Activated CD4-positive, alpha-beta memory T cell treated with anti-CD3 and anti-CD28 coated beads for 36 hours (primary cell): ENCODE measurements at regions of chr12 and their contacts with region 1.

Region 1: DNA sequence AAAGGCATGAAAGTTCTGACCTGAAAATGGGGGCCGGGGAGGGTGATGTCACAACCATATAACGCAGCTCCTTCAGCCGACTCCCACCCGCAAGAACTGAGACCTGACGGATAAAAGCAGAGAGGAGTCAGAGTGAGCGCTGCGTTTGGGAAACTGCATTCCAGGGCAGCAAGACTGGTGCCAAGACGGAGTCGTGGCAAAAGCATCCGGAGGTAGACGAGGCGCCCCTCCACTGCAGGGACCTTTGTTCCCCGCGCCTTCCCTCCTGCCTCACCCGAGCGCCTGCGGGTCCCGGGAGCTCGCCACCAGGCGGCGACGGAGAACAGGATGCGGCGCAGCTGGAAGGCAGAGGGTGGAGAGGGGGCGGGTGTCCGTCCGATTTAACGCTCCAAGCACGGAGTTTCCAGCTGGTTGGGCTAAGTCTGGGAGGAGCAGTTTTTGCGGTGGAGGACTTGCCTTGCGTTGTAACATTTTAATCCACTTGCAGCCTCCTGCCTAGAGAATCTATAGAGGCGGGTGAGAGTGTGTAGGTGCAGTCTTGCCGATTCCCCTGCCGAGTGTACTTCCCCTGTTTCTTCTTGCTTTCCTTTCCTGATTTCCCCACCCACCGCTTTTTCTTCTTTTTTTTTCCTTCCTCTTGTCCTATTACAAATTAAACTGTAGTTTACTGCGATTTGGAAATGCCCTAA is 1.2 kb upstream of the CPNE8 start:
- DNase-seq: peak; percentile 80
- H3K4me3 Mint-ChIP-seq: peak overlapping the region; percentile 82
- H3K27ac Mint-ChIP-seq: peak overlapping the region; percentile 89
- H3K4me1 Mint-ChIP-seq: peaks cover 18% of the 10 kb centered on the region
- H3K27me3 Mint-ChIP-seq: peaks cover 20% of the 10 kb centered on the region

Region 2: DNA sequence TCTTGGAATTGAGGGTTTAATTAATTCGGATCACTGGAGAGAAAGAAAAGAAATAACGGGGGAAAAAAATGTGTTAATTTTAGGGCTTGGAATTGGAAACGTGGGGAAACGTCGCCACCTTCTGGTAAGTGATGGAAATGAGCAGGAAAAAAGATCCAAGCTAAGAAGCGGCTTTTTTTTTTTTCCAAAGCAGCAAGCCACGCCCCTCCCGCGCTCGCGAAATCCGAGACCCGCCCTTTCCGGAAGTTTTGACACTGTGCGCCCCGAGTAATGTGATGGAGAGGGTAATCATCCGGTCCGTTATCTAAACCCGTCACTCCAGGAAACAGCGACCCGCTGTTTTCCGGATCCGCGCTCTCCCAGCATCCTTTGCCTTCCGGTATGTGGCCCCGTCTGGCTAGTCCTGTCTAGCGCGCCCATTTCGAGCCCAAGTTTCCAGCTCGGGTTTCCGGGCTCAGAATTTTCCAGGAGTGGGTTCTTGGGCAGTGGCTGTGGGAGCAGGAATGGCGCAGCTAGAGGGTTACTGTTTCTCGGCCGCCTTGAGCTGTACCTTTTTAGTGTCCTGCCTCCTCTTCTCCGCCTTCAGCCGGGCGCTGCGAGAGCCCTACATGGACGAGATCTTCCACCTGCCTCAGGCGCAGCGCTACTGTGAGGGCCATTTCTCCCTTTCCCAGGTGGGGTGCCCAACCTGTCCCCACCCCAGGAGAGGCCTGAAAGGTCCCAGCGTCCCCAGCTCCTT is 590.1 kb before region 1 on chr12 and contains the start of gene ALG10B:
- CTCF ChIA-PET with region 1: no interaction called
- POLR2A ChIA-PET with region 1: no interaction called
- intact Hi-C with region 1: loop called (anchors 2 kb)
- DNase-seq: peak; percentile 95
- H3K4me3 Mint-ChIP-seq: peak within 1 kb of the TSS; percentile 95
- H3K27ac Mint-ChIP-seq: peak within 1 kb of the TSS; percentile 91
- H3K4me1 Mint-ChIP-seq: peaks cover 15% of the 10 kb centered on the region
- H3K27me3 Mint-ChIP-seq: no peaks in the 10 kb centered on the region
- total RNA-seq, gene ALG10B: 11.8 to 14.0 TPM

Region 3: GRCh38 chr12:38776647-38777046 is 130.0 kb before region 1 on chr12:
- CTCF ChIA-PET with region 1: interaction called, 3 read pairs
- POLR2A ChIA-PET with region 1: interaction called, 3 read pairs
- intact Hi-C with region 1: loop called (anchors 2 kb)
- DNase-seq: no peak
- H3K4me3 Mint-ChIP-seq: no peak overlapping the region
- H3K27ac Mint-ChIP-seq: no peak overlapping the region
- H3K4me1 Mint-ChIP-seq: peaks cover 10% of the 10 kb centered on the region
- H3K27me3 Mint-ChIP-seq: no peaks in the 10 kb centered on the region

Region 4: DNA sequence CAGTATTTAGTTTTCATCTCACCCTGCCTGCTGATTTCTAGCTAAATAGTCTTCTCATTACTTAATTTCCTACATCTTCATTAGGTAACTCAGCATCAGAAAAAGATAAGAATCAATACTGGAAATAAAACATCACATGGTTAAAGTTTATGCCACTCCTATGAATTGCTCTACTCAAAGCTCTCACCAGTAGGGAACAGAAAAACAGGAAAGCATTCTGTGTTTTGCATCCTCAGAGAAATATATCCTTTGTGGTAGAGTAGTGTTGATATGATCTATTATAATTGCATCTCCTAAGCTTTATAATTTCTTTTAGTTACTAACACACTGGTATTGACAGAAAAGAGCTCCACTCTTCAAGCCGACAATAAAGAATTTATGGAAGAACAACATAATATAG is 11.2 kb before region 1 on chr12:
- CTCF ChIA-PET with region 1: interaction called, 16 read pairs
- POLR2A ChIA-PET with region 1: interaction called, 6 read pairs
- intact Hi-C with region 1: no loop called
- DNase-seq: no peak
- H3K4me3 Mint-ChIP-seq: no peak overlapping the region
- H3K27ac Mint-ChIP-seq: no peak overlapping the region
- H3K4me1 Mint-ChIP-seq: peaks cover 17% of the 10 kb centered on the region
- H3K27me3 Mint-ChIP-seq: no peaks in the 10 kb centered on the region

Region 5: DNA sequence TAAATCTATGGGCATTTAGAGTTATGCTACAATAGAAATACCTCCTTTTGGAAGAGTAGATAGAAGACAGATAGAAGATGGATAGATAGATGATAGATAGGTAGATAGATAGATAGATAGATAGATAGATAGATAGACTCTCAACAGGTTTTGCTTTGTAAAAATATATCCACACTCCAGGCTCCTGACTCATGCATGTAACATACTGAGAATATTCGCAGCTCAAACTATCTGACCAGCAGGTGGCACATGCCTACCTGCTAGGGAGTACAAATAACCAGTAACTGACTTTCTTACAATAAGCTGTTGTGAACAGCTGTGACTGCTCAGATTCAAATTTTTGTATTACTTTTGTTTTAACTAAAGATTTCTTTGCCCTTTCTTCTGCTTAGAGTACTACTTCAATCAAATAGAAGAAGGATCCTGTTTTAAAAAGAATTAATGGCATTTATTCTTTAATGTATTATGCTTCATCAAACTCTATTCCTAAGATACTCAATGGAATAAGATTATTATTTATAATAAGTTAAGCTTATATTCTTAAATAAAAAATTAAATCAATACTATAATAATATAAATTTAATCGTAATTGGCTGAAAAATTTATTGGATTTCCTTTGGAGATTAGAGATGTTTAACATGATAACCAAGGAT is 14.5 kb after region 1 on chr12:
- CTCF ChIA-PET with region 1: interaction called, 14 read pairs
- POLR2A ChIA-PET with region 1: no interaction called
- intact Hi-C with region 1: no loop called
- DNase-seq: peak; percentile 46
- H3K4me3 Mint-ChIP-seq: no peak overlapping the region
- H3K27ac Mint-ChIP-seq: no peak overlapping the region
- H3K4me1 Mint-ChIP-seq: no peaks in the 10 kb centered on the region
- H3K27me3 Mint-ChIP-seq: no peaks in the 10 kb centered on the region

Region 6: GRCh38 chr12:39103552-39104165 is 197.0 kb after region 1 on chr12:
- CTCF ChIA-PET with region 1: interaction called, 12 read pairs
- POLR2A ChIA-PET with region 1: no interaction called
- intact Hi-C with region 1: loop called (anchors 5 kb)
- DNase-seq: no peak
- H3K4me3 Mint-ChIP-seq: no peak overlapping the region
- H3K27ac Mint-ChIP-seq: no peak overlapping the region
- H3K4me1 Mint-ChIP-seq: peaks cover 3% of the 10 kb centered on the region
- H3K27me3 Mint-ChIP-seq: no peaks in the 10 kb centered on the region

Region 7: GRCh38 chr12:39272871-39273770 is 366.5 kb after region 1 on chr12:
- CTCF ChIA-PET with region 1: interaction called, 3 read pairs
- POLR2A ChIA-PET with region 1: no interaction called
- intact Hi-C with region 1: loop called (anchors 10 kb)
- DNase-seq: no peak
- H3K4me3 Mint-ChIP-seq: no peak overlapping the region
- H3K27ac Mint-ChIP-seq: no peak overlapping the region
- H3K4me1 Mint-ChIP-seq: no peaks in the 10 kb centered on the region
- H3K27me3 Mint-ChIP-seq: peaks cover 6% of the 10 kb centered on the region

Region 8: GRCh38 chr12:39287409-39287808 is 380.8 kb after region 1 on chr12:
- CTCF ChIA-PET with region 1: no interaction called
- POLR2A ChIA-PET with region 1: no interaction called
- intact Hi-C with region 1: no loop called
- DNase-seq: no peak
- H3K4me3 Mint-ChIP-seq: no peak overlapping the region
- H3K27ac Mint-ChIP-seq: no peak overlapping the region
- H3K4me1 Mint-ChIP-seq: no peaks in the 10 kb centered on the region
- H3K27me3 Mint-ChIP-seq: peaks cover 2% of the 10 kb centered on the region